ENCODE measurements at regions of chr13 and their contacts with region 1.

Region 1: DNA sequence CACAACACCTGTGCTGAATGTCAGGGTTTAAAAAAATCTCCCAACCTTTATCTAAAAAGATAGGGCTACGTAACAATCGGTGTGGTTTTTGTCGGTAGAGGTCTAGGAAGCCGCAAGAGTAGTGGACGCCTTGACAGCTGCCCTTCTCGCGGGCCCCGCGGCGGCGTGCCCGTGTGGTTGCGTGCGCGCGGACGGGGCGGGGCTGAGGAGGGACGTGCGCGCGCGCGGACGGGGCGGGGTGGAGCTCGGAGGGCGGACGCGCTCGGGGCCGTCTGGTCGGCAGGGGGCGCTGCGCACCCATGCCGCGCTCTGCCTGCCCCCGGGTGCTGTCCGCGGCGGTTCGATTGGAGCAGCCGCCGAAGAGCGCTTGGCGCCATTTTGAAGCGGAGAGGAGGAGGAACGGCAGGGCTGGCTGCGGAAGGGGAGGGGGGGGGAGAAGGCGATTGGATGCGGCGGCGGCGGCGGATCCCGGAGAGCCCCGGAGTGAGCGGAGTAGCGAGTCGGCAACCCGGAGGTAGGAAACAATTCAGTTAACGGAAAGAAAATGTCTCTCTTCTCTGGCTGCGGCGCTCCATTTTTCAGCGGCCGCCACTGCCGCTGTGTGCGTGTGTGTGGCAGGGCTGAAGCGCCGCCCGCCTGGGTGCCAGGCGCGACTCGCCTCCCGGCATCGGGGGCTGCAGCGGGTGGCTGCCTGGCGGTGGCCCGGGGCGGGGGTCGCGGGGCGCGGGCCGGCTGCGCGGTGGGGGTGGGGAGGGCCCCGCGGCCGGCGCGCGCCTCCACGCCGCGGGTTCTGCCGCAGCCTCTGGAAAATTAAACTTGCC is at the start of gene PDS5B:
- DNase-seq: peak; percentile 94 to 96 (median 95)
- H3K4me3 ChIP-seq: peak within 1 kb of the TSS; percentile 41 to 81 (median 52)
- H3K27ac ChIP-seq: peak within 1 kb of the TSS; percentile 79 to 99 (median 85)
- H3K4me1 ChIP-seq: peaks cover 6 to 29% of the 10 kb centered on the region in 2 donors
- H3K27me3 ChIP-seq: no peaks in the 10 kb centered on the region
- CTCF ChIP-seq: peak; percentile 50 to 99 (median 78)
- POLR2A ChIP-seq: peak; percentile 23 to 62
- total RNA-seq, gene PDS5B: 15.3 to 59.4 (median 31.6) TPM

Region 2: DNA sequence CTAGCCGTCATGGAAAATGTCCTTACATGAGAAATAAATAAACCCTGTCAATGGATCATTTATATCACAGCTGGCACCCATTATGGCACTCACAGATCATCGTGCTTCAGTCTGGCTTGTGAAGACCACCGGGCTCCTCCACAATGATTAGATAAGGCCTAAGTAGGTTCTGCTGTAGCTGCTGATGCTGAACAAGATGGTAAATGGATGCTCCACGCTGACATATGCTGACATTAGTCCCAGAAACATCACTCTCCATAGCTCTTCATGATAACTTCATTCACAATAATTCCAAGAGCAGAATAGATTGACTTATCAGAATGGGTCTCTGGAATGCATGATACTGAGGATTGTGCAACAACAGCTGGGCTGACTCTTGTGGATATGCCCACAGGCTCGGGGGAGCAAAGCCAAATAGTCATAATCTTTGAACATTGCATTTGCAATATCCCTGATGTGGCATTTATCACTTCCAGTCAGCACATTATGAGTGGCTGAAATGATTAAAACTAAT is 910.8 kb before region 1 on chr13:
- intact Hi-C with region 1: no loop called
- DNase-seq: no peak
- H3K4me3 ChIP-seq: no peak overlapping the region
- H3K27ac ChIP-seq: no peak overlapping the region
- H3K4me1 ChIP-seq: no peaks in the 10 kb centered on the region
- H3K27me3 ChIP-seq: no peaks in the 10 kb centered on the region
- CTCF ChIP-seq: no peak
- POLR2A ChIP-seq: no peak

Region 3: DNA sequence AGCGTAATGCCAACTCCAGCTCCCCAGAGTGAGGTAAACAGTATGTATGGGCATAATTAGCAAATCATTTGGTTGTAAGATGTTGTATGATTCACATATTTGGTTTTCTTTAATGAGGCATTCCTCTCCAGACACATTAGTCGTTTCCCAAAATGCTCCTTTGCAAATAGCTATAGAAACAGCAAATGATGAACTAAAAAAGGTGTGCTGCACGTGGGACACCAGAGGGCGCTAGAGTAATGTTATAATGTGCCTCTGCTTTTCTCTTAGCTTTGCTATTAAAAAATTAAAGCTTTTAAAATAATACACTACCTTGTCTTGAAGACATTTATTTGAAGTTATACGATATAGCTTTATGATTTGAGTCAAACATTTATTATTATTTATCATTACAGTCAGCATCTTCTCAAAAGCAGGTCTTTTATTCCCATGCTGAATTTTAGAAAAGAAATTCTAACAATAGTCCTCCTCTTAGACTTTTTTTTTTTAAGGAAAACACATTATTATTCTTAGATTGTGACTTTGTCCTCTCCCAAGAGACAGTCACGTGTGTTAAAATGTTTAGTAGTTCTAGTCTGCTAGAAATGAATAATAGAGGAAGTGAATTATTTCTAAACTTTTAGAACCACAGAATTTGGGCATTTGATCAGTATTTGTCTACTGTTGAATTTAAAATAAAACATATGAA is 676.3 kb before region 1 on chr13:
- intact Hi-C with region 1: loop called in 1 of 2 experiments (anchors 10 kb)
- DNase-seq: peak; percentile 31 to 76 (median 49)
- H3K4me3 ChIP-seq: no peak overlapping the region
- H3K27ac ChIP-seq: no peak overlapping the region
- H3K4me1 ChIP-seq: peaks cover 0 to 6% of the 10 kb centered on the region in 2 donors
- H3K27me3 ChIP-seq: no peaks in the 10 kb centered on the region
- CTCF ChIP-seq: peak; percentile 71 to 93 (median 80)
- POLR2A ChIP-seq: no peak

Region 4: DNA sequence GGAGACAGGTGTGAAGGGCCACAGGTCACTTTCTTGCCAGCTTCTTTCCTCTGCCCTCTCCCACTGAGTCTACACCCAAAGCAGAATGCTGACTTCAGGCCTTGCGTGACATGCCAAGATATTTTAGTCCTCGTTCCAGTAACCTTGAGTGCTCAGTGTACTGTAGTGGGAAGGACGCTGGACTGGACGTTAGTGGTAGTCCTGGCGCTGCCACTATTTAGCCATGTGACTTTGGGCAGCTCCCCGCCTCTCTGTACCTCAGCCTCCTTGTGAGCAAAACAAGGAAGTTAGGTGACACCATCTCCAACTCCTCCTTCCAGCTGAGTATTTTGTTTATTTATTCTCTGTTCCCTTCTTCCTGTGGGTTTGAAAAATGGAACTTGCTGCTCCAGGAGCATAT is 468.6 kb before region 1 on chr13:
- intact Hi-C with region 1: no loop called
- DNase-seq: peak; percentile 47 to 86 (median 77)
- H3K4me3 ChIP-seq: no peak overlapping the region
- H3K27ac ChIP-seq: peak overlapping the region in 3 of 5 donors; percentile 27 to 47 (median 44)
- H3K4me1 ChIP-seq: peaks cover 0 to 16% of the 10 kb centered on the region in 2 donors
- H3K27me3 ChIP-seq: no peaks in the 10 kb centered on the region
- CTCF ChIP-seq: no peak
- POLR2A ChIP-seq: no peak

Region 5: DNA sequence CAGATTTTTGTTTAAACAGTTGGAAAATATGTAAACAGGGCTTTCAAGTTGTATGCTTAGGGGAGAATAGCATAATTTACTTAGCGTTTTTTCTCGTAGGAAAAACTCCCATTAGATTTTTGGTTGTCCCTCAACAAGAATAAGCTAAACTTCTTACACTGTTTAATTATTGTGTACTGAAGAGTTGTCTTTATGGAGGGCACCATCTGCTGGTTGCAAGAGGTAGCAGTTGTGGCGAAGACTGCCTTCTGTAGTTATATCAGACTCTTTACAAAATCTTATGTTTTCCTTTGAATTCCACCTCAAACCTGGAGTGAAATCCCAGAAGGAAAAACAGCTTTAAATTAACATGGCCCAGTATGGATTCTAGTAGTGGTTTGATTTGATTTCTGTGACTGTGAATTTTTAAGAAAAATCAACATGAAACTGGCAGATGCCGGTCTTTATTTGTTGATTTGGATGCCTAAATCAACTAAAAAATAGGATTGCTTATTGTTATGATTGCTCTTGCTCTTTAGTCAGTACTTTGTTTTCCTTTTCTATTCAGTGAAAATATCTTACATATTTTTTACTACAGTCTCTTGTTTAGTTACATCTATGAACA is 53.3 kb after region 1 on chr13:
- intact Hi-C with region 1: loop called (anchors 2 to 10 kb)
- DNase-seq: peak; percentile 41 to 86 (median 62)
- H3K4me3 ChIP-seq: no peak overlapping the region
- H3K27ac ChIP-seq: no peak overlapping the region
- H3K4me1 ChIP-seq: peaks cover 0 to 17% of the 10 kb centered on the region in 2 donors
- H3K27me3 ChIP-seq: no peaks in the 10 kb centered on the region
- CTCF ChIP-seq: peak; percentile 62 to 85 (median 76)
- POLR2A ChIP-seq: no peak

Region 6: DNA sequence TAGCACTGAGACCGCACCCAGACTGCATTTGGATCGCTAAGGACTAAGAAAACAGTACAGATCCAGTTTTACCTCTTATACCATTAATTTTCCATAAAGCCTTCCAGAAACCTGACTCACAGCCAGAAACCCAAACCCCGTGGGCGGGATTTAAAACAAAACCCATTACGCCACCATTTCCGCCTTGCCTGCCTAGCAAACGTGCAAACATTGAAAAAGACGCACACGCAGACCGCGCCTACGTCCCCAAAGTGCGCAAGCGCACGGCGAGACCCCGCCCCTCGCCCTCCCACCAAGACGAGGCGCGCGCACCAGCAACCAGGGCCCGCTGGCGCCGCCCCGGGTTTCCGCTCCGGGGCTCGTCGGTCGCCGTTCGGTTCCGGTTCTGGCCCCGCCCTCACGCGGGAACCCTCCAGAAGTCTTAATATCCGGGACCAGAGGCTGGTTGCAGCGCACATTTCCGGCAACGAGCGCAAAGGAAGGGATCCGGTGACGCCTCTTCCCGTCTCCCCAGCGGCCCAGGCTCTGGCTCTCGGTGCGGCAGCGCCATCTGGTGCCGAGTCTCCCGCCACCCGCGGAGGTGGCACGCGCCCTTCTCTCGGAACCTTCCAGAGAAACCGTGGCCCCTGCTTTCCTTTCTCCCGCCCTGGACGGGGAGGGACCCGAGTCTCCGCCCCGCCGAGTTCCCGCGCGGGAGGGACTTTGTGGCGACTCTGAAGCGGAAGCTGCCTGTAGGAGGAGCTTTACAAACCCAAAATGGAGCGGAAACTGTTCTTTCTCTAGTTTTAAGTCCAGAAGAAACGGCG is 956.2 kb after region 1 on chr13:
- intact Hi-C with region 1: loop called in 1 of 2 experiments (anchors 10 kb)
- DNase-seq: peak; percentile 98 to 99 (median 99)
- H3K4me3 ChIP-seq: peak overlapping the region in 2 of 4 donors; percentile 17 to 40
- H3K27ac ChIP-seq: peak overlapping the region; percentile 96 to 99 (median 98)
- H3K4me1 ChIP-seq: peaks cover 20 to 28% of the 10 kb centered on the region in 2 donors
- H3K27me3 ChIP-seq: no peaks in the 10 kb centered on the region
- CTCF ChIP-seq: peak; percentile 78 to 98 (median 95)
- POLR2A ChIP-seq: peak; percentile 38 to 77

Measured in adrenal gland (tissue), 19 donors.